ENCODE measurements at regions of chr19 and their contacts with region 1.

Region 1: DNA sequence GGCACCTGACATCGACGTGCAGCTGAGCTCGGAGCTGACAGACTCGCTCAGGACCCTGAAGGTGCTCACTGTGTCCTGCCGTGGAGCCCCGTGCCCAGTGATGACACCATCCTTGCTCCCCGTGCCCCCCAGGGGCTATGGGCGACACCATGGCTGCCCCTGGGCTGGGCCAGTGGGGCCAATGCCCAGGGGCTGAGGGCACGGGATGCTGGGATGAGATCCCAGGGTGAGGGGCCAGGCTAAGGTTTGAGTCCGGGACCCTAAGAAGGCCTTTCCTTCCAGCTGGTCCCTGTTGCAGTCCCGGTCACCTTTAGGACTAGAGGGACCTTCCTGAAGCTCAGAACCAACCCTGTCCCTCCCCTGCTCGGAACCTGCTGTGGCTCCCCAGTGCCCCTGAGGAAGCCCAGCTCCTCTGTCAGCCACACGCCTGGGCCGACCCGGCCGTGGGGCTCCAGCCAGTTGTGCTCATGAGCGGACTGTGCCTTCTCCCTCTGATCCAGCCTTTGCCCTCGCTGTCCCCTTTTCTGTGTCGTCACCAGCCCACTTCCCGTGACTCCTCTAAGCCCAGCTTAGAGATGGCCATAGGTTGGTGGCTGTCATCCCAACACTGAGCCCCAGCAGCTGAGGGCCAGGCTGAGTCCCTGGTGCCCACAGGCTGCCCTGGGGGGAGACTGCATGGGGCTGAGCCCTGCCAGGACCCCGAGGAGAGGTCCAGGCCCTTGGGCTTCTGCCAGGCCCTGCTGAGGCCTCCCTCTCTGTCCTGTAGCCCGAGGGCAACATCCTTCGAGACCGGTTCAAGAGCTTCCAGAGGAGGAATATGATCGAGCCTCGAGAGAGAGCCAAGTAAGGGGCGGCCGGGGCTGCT is 10.6 kb downstream of the NOP53 start:
- DNase-seq: no peak
- H3K4me3 ChIP-seq: no peak overlapping the region
- H3K27ac ChIP-seq: no peak overlapping the region
- H3K4me1 ChIP-seq: no peaks in the 10 kb centered on the region
- H3K27me3 ChIP-seq: no peaks in the 10 kb centered on the region
- CTCF ChIP-seq: no peak

Region 2: GRCh38 chr19:47257444-47258169 is 498.4 kb before region 1 on chr19:
- CTCF ChIA-PET with region 1: no interaction called
- POLR2A ChIA-PET with region 1: no interaction called
- intact Hi-C with region 1: no loop called
- DNase-seq: no peak
- H3K4me3 ChIP-seq: peak overlapping the region; percentile 52
- H3K27ac ChIP-seq: peak overlapping the region; percentile 84
- H3K4me1 ChIP-seq: peaks cover 7% of the 10 kb centered on the region
- H3K27me3 ChIP-seq: no peaks in the 10 kb centered on the region
- CTCF ChIP-seq: no peak

Region 3: DNA sequence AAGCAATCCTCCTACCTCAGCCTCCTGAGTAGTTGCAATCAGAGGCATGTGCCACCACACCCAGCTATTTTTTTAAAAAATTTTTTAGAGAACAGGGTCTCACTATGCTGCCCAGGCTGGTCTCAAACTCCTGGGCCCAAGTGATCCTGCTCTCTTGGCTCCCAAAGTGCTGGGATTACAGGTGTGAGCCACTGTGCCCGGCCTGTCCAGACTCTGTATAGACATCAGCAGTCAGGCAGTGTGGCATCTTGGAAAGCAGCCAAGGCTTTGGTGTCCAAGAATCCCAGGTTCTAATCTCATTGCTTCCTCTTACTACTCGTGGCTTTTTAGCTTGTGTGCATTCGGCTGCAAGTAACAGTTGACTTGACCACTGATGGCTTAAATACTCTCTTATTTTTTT is 103.7 kb before region 1 on chr19:
- CTCF ChIA-PET with region 1: interaction called, 11 read pairs
- POLR2A ChIA-PET with region 1: no interaction called
- intact Hi-C with region 1: no loop called
- DNase-seq: no peak
- H3K4me3 ChIP-seq: no peak overlapping the region
- H3K27ac ChIP-seq: no peak overlapping the region
- H3K4me1 ChIP-seq: no peaks in the 10 kb centered on the region
- H3K27me3 ChIP-seq: no peaks in the 10 kb centered on the region
- CTCF ChIP-seq: no peak